ENCODE measurements at regions of chr20 and their contacts with region 1.

Region 1: GRCh38 chr20:22586645-22587310 is 2.4 kb upstream of the FOXA2 start:
- DNase-seq: peak; percentile 83
- ATAC-seq: peak; percentile 44
- H3K4me3 Mint-ChIP-seq: peak overlapping the region; percentile 79
- H3K27ac Mint-ChIP-seq: no peak overlapping the region
- H3K4me1 Mint-ChIP-seq: peaks cover 58% of the 10 kb centered on the region
- H3K27me3 Mint-ChIP-seq: peaks cover 91% of the 10 kb centered on the region
- CTCF ChIP-seq: peak; percentile 91

Region 2: DNA sequence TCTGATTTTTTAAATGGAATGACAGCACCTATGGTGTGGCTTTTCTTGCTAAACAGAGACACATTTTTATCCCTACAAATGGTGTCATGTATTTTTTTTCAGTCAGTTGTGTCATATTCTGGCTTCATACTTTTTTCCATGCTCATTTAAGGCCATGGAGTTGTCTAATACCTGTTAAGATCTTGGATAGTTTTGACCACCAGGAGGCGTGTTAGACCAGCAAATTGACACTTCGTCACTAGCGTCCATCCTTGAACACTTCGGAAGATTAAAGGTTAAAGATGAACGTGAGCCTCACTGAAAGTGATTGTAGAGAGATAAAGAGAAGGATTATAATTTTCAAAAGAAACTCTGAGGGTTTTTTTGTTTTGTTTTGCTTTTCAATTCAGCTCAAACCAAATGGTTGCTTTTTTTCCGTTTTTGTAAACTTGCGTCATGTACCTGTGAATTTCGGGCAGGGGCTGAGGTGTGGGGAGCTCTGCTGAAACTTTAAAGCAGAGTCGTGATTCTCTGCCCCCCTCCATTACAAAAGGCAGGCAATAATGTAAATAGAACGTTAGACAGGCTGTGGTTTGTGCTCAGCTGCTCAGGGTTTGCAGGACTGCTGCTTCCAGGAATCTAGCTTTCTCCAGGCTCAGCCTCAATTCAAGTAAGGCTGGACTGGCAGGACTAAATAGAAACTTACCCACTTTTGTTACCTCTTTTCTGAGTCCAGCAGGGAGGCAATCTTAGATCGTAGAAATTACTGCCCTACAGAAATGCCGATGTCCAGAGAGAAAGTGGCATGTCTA is 247.5 kb before region 1 on chr20:
- CTCF ChIA-PET with region 1: interaction called, 50 read pairs
- POLR2A ChIA-PET with region 1: no interaction called
- DNase-seq: peak; percentile 45
- ATAC-seq: peak; percentile 66
- H3K4me3 Mint-ChIP-seq: peak overlapping the region; percentile 38; the same call in 1 of the 2 replicates
- H3K27ac Mint-ChIP-seq: no peak overlapping the region
- H3K4me1 Mint-ChIP-seq: peaks cover 12% of the 10 kb centered on the region
- H3K27me3 Mint-ChIP-seq: peaks cover 14% of the 10 kb centered on the region
- CTCF ChIP-seq: peak; percentile 77

Region 3: DNA sequence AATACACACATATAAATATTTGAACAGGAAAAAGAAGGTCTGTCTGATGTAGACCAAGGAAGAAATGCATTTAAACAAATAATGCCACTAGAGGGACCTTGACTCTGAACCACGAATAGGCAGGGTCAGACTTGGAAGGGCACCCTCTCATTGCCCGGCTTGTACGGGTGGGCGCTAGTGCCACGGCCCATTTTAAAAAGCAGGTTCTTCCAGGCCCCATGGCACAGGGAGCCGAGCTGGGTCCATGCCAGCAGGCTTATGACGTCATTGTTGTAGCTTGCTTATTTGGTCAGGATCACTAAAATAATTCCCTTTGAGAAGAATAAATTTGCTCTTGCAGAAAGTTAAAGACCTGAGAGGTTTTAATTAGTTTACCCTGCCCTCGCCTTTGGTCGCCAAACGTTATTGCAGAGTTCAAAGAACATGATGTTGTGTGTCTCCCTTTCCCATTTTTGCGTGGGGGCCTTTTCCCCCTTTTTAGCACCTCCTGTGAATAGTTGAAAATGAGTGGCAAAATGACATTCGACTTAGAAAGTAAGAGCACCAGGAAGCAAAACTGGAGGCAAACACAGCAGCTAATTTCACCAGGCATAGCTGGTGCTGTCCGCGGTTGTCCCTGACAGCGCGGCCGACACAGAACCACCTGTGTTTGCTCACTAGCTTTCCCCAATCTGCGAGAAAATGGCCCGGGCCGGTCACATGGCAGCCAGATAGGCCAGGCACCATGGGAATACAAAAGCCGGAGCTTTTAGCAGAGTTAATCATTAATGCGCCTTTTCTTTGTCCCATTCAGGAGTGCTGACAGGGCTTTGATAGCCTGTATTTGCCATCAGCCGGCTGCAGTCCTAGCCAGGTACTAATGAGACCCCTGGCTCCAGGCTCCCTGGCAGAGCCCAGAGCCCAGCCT is 96.2 kb before region 1 on chr20:
- CTCF ChIA-PET with region 1: interaction called, 15 read pairs
- POLR2A ChIA-PET with region 1: no interaction called
- DNase-seq: peak; percentile 45
- ATAC-seq: peak; percentile 82
- H3K4me3 Mint-ChIP-seq: no peak overlapping the region
- H3K27ac Mint-ChIP-seq: no peak overlapping the region
- H3K4me1 Mint-ChIP-seq: peaks cover 28% of the 10 kb centered on the region
- H3K27me3 Mint-ChIP-seq: peaks cover 4% of the 10 kb centered on the region
- CTCF ChIP-seq: no peak

Region 4: GRCh38 chr20:22567944-22568871 is 18.6 kb before region 1 on chr20:
- CTCF ChIA-PET with region 1: interaction called, 44 read pairs
- POLR2A ChIA-PET with region 1: no interaction called
- DNase-seq: peak; percentile 57
- ATAC-seq: peak; percentile 53
- H3K4me3 Mint-ChIP-seq: peak overlapping the region; percentile 71
- H3K27ac Mint-ChIP-seq: no peak overlapping the region
- H3K4me1 Mint-ChIP-seq: peaks cover 76% of the 10 kb centered on the region
- H3K27me3 Mint-ChIP-seq: peaks cover 99% of the 10 kb centered on the region
- CTCF ChIP-seq: no peak

Region 5: DNA sequence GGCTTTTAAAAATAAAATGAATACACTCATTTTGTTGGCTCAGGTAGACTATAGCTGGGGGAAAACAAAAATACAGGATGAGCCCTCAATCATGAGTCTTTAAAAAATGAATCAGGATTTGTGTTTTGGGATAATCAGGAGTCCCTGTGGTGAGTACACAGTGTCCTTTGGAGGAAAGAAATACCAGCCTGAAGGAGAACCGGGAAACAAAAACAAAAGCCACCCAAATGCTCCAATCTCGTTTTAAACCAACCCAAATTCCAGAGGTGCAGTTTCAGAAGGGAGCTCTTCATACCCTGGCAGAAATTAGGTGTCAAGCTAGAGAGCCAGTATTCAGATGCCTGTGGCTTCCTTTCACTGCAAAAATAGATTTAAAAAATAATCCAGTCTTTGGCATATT is 20.9 kb after region 1 on chr20:
- CTCF ChIA-PET with region 1: interaction called, 11 read pairs
- POLR2A ChIA-PET with region 1: no interaction called
- DNase-seq: no peak
- ATAC-seq: no peak
- H3K4me3 Mint-ChIP-seq: no peak overlapping the region
- H3K27ac Mint-ChIP-seq: no peak overlapping the region
- H3K4me1 Mint-ChIP-seq: peaks cover 36% of the 10 kb centered on the region
- H3K27me3 Mint-ChIP-seq: peaks cover 16% of the 10 kb centered on the region
- CTCF ChIP-seq: no peak

Region 6: DNA sequence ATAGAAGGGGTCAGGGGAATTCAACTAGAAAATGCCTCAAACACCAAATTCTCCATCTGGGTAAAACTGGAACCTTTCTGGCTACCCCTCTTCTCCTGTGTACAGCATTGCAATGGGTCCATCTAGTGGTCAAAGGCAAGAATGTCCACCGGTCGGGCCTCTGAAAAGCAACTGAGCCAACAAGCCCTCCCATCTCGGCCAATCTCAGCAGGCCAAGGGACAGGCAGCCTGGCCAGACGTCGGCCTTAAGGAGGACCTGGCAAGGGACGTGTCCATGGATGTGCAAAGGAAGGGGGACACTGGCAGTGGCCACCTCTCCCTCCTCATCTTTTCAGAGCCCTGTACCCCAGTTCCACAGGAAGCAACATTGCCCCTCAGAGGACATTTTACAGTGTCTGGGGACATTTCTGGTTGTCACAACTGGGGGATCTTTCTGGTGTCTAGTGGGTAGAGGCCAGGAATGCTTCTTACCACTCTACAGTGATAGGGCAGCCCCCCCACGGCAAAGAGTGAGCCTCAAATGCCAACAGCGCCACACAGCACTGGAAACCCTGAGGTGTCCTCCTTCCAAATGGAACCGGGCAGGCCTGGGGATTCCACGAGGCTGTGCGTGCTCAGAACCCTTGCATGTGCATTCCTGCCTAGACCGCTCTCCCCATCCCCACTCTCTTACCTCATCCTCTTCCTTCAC is 97.4 kb after region 1 on chr20:
- CTCF ChIA-PET with region 1: interaction called, 75 read pairs
- POLR2A ChIA-PET with region 1: no interaction called
- DNase-seq: peak; percentile 84
- ATAC-seq: peak; percentile 87
- H3K4me3 Mint-ChIP-seq: no peak overlapping the region
- H3K27ac Mint-ChIP-seq: no peak overlapping the region
- H3K4me1 Mint-ChIP-seq: peaks cover 29% of the 10 kb centered on the region
- H3K27me3 Mint-ChIP-seq: peaks cover 24% of the 10 kb centered on the region
- CTCF ChIP-seq: peak; percentile 88

Measured in WTC11 (cell line).